Natural killer cell (primary cell): ENCODE measurements at regions of chr5 and their contacts with region 1.

Region 1: DNA sequence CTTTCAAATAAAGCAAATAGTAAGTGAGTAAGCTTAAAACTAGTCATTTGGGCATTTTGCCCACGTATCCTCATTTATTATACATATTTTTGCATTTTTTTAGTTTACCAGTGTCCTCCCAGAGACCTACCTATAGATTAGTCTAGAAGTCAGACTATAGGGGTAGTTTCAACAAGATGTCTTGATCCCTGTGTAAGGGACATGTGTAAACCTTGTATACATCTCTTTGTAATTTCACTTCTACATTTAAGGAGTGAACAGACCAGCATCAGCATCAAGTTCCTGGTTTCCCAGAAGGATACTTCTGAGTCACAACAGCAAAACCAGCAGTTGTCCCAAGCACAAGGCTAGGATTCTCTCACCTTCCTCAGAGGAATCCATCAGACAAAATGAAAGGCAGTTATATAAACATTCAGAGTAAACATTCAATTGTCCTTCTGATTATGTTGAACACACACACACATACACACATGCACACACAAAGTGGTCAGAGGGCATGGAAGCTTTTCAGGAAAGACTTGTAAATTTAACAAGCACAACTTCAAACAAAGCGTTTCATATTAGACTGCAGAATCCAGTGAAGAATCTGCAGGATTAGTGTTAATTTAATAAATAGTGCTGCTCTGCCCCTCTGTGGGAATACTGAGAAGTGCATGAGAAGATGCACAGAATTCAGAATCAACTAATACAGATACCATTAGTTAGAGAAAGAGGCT is 55.4 kb downstream of the HINT1 start:
- DNase-seq: peak in 1 of 2 donors; percentile 68
- ATAC-seq: peak; percentile 62 to 80 (median 73)
- H3K4me3 ChIP-seq: no peak overlapping the region
- H3K4me3 Mint-ChIP-seq: no peak overlapping the region
- H3K27ac ChIP-seq: no peak overlapping the region
- H3K27ac Mint-ChIP-seq: no peak overlapping the region
- H3K4me1 ChIP-seq: no peaks in the 10 kb centered on the region
- H3K4me1 Mint-ChIP-seq: no peaks in the 10 kb centered on the region
- H3K27me3 ChIP-seq: no peaks in the 10 kb centered on the region
- H3K27me3 Mint-ChIP-seq: no peaks in the 10 kb centered on the region
- CTCF ChIP-seq: peak; percentile 86

Region 2: GRCh38 chr5:130109152-130109551 is 1000.5 kb before region 1 on chr5:
- intact Hi-C with region 1: loop called (anchors 1 kb)
- DNase-seq: peak in 1 of 2 donors; percentile 33
- ATAC-seq: no peak
- H3K4me3 ChIP-seq: no peak overlapping the region
- H3K4me3 Mint-ChIP-seq: no peak overlapping the region
- H3K27ac ChIP-seq: no peak overlapping the region
- H3K27ac Mint-ChIP-seq: no peak overlapping the region
- H3K4me1 ChIP-seq: no peaks in the 10 kb centered on the region
- H3K4me1 Mint-ChIP-seq: no peaks in the 10 kb centered on the region
- H3K27me3 ChIP-seq: no peaks in the 10 kb centered on the region
- H3K27me3 Mint-ChIP-seq: no peaks in the 10 kb centered on the region
- CTCF ChIP-seq: peak; percentile 26

Region 3: DNA sequence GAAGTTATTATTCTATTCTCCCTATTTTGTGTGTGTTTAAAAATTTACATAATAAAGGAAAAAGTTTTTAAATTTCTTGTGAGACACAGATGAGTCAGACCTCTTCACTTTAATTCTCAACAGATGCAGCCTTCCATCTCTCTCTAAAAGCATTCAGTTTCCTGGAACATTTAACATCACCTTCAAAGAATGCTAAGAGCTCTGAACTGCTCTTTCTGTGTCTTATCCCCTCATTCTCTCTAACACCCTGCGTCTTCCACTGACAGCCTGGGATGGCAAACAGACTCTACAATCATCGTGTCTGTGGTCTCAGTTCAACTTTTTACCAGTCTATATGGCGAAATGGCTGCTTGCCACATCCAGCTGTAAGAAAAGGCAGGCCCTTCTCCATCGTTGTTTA is 117.6 kb before region 1 on chr5:
- intact Hi-C with region 1: no loop called
- DNase-seq: no peak
- ATAC-seq: no peak
- H3K4me3 ChIP-seq: no peak overlapping the region
- H3K4me3 Mint-ChIP-seq: no peak overlapping the region
- H3K27ac ChIP-seq: no peak overlapping the region
- H3K27ac Mint-ChIP-seq: no peak overlapping the region
- H3K4me1 ChIP-seq: no peaks in the 10 kb centered on the region
- H3K4me1 Mint-ChIP-seq: no peaks in the 10 kb centered on the region
- H3K27me3 ChIP-seq: no peaks in the 10 kb centered on the region
- H3K27me3 Mint-ChIP-seq: peaks cover 0 to 6% of the 10 kb centered on the region in 2 donors
- CTCF ChIP-seq: no peak

Region 4: GRCh38 chr5:131193106-131193505 is 83.4 kb after region 1 on chr5:
- intact Hi-C with region 1: no loop called
- DNase-seq: no peak
- ATAC-seq: no peak
- H3K4me3 ChIP-seq: no peak overlapping the region
- H3K4me3 Mint-ChIP-seq: no peak overlapping the region
- H3K27ac ChIP-seq: no peak overlapping the region
- H3K27ac Mint-ChIP-seq: no peak overlapping the region
- H3K4me1 ChIP-seq: no peaks in the 10 kb centered on the region
- H3K4me1 Mint-ChIP-seq: no peaks in the 10 kb centered on the region
- H3K27me3 ChIP-seq: no peaks in the 10 kb centered on the region
- H3K27me3 Mint-ChIP-seq: no peaks in the 10 kb centered on the region
- CTCF ChIP-seq: no peak